ENCODE measurements at regions of chr17 and their contacts with region 1.

Region 1: GRCh38 chr17:79915850-79916430 is 76.7 kb upstream of the CBX4 start:
- DNase-seq: peak; percentile 66
- H3K4me3 Mint-ChIP-seq: no peak overlapping the region
- H3K27ac Mint-ChIP-seq: no peak overlapping the region
- H3K4me1 Mint-ChIP-seq: no peaks in the 10 kb centered on the region
- H3K27me3 Mint-ChIP-seq: peaks cover 2% of the 10 kb centered on the region

Region 2: GRCh38 chr17:79789534-79790353 is 126.2 kb before region 1 on chr17:
- CTCF ChIA-PET with region 1: interaction called, 3 read pairs
- intact Hi-C with region 1: loop called (anchors 5 kb)
- DNase-seq: no peak
- H3K4me3 Mint-ChIP-seq: no peak overlapping the region
- H3K27ac Mint-ChIP-seq: no peak overlapping the region
- H3K4me1 Mint-ChIP-seq: peaks cover 8% of the 10 kb centered on the region
- H3K27me3 Mint-ChIP-seq: peaks cover 53% of the 10 kb centered on the region

Region 3: DNA sequence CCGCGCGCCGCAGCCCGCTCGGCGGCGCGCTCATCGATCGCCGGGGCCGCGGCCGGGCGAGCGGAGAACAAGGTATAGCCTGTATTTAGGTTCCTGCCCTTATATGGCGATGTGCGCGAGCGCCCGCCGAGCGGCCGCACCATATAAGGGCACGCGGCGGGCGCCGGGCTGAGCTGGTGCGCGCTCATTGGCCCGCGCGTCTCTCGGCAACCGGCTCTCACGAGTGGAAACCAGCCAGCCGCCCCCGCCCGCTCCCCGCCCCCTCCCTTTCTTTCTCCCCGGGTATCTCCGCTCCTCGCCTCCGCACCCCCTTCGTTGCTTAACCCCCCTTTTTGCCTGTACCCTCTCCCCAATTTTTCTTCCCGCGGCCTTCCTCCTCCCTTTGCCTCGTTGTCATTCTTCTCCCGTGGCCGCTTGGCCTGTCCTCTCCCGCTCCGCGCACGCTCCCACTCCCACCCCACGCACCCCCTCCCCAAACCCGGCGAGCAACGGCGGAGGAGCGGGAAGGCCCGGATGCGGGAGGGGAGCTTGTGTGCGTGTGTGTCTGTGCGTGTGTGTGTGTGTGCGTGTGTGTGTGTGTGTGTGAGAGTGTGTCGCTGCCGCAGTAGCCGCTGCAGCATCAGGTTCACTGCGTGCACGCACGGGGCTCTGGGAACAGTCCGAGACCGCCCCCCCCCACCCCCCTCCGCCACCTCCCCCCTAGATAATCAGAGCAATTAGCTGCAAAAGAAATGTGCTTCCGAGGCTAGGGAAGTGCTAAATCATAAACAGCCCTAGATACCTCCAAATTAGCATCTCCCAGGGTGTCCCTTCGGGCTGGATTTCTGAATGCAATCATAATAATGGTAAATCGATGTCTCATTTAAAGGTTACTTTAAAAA is 105.6 kb before region 1 on chr17:
- CTCF ChIA-PET with region 1: interaction called, 6 read pairs
- intact Hi-C with region 1: loop called (anchors 1 kb)
- DNase-seq: peak; percentile 85
- H3K4me3 Mint-ChIP-seq: peak overlapping the region; percentile 29
- H3K27ac Mint-ChIP-seq: no peak overlapping the region
- H3K4me1 Mint-ChIP-seq: peaks cover 31% of the 10 kb centered on the region
- H3K27me3 Mint-ChIP-seq: peaks cover 65% of the 10 kb centered on the region

Region 4: GRCh38 chr17:79977161-79977631 is 61.3 kb after region 1 on chr17:
- CTCF ChIA-PET with region 1: no interaction called
- intact Hi-C with region 1: no loop called
- DNase-seq: no peak
- H3K4me3 Mint-ChIP-seq: no peak overlapping the region
- H3K27ac Mint-ChIP-seq: no peak overlapping the region
- H3K4me1 Mint-ChIP-seq: no peaks in the 10 kb centered on the region
- H3K27me3 Mint-ChIP-seq: no peaks in the 10 kb centered on the region